Activated B cell treated with CpG ODN at 0.5 μM for 24 hours (primary cell): ENCODE measurements at regions of chr6 and their contacts with region 1.

Region 1: DNA sequence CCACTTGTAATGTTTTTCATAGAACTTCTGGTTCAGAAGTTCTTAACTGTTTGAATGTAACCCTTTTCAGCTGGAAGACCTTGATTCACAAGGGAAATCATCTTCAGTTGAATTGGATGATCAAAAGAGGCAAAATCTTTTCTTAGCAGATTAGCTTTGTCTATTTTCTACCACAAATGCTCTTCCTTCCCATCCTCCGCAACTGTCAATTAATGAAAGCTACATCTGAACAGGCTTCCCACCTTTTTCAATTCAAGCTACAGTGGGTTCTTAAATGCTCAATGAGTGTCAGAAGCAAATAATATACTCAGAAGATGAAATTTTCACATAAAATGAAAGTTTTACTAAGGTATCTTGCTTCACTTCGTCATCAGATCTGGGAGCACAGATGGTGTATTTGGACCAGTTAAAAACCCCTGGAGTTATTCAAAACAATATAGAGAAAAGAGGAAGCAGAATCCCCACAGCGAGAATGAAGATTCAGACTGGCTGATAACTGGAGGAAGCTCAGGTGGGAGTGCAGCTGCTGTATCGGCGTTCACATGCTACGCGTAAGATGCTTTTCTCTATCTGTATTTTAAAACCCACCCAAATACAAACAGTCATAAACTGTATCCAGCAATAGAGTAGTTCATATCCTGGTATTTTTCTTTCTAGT is 19.4 kb downstream of the QRSL1 start:
- DNase-seq: no peak
- ATAC-seq: peak; percentile 96
- H3K4me3 Mint-ChIP-seq: peak overlapping the region; percentile 84
- H3K27ac Mint-ChIP-seq: peak overlapping the region; percentile 96
- H3K4me1 Mint-ChIP-seq: peaks cover 48% of the 10 kb centered on the region
- H3K27me3 Mint-ChIP-seq: no peaks in the 10 kb centered on the region
- CTCF ChIP-seq: no peak

Region 2: DNA sequence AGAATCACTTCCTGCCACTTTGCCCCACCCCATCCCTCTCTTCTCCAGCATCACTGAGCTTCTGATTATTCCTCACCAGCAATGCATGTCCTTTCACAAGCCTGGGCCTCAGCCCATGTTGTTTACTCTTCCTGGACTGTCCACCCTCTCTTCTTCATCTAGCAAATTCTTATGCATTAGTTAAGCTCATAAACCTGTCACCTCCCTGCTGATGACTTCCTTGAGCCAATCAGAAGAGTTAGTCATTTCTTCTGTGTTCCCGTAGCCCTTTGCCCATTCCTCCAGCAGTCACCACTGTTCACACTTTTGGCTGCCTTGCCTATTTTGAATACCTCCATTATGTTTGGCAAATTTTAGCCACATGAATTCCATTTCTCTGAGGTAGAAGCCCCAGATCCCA is 292.4 kb before region 1 on chr6:
- CTCF ChIA-PET with region 1: no interaction called
- POLR2A ChIA-PET with region 1: no interaction called
- intact Hi-C with region 1: no loop called
- DNase-seq: no peak
- ATAC-seq: no peak
- H3K4me3 Mint-ChIP-seq: no peak overlapping the region
- H3K27ac Mint-ChIP-seq: no peak overlapping the region
- H3K4me1 Mint-ChIP-seq: peaks cover 10% of the 10 kb centered on the region
- H3K27me3 Mint-ChIP-seq: peaks cover 43% of the 10 kb centered on the region
- CTCF ChIP-seq: no peak

Region 3: DNA sequence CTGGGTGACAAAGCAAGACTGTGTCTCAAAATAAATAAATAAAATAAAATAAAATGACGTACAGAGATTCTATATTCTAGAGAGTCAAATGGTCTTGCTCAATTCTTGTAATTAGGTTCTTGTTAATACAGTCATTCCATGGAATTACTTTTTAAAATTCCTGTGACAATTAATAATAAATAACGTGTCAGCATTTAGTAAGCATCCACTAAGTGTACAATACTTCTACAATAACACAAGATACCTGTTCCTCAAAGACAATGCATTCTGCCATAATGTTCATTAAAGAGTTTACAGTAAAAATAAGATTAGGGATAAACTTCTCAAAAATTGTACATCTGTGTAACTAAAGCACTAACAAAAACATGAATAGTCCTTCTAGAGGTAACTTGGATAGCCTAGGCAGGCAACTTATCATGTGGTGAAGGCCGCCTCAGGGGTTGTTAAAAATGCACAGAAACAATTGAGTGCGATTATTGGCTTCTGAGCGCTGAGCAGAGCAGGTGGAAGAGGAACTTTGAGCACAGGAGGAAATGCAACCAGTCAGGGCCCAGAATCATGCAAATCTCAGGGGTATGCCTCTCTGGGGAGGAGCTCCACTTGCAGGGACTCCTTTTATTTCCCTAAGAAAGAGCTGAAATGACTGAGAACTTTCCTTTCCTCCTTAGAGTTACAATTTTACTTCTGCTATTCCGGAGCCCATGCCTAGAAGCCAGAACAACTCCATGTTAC is 17.7 kb after region 1 on chr6:
- CTCF ChIA-PET with region 1: interaction called, 3 read pairs
- POLR2A ChIA-PET with region 1: interaction called, 10 read pairs
- intact Hi-C with region 1: loop called (anchors 1 kb)
- DNase-seq: peak; percentile 49
- ATAC-seq: peak; percentile 99
- H3K4me3 Mint-ChIP-seq: peak overlapping the region; percentile 66
- H3K27ac Mint-ChIP-seq: peak overlapping the region; percentile 87
- H3K4me1 Mint-ChIP-seq: peaks cover 66% of the 10 kb centered on the region
- H3K27me3 Mint-ChIP-seq: no peaks in the 10 kb centered on the region
- CTCF ChIP-seq: no peak